Mammary epithelial cell (primary cell): ENCODE measurements at regions of chr3 and their contacts with region 1.

Region 1: GRCh38 chr3:47164007-47164881 is at the start of gene SETD2:
- DNase-seq: peak; percentile 91
- H3K4me3 ChIP-seq: peak within 1 kb of the TSS; percentile 92 to 99 (median 95)
- H3K27ac ChIP-seq: peak within 1 kb of the TSS; percentile 80
- H3K4me1 ChIP-seq: peaks cover 13% of the 10 kb centered on the region
- H3K27me3 ChIP-seq: no peaks in the 10 kb centered on the region
- CTCF ChIP-seq: peak in 1 of 2 donors; percentile 42
- total RNA-seq, gene SETD2: 27.7 to 36.5 TPM

Region 2: GRCh38 chr3:46935168-46935858 is 228.9 kb before region 1 on chr3:
- CTCF ChIA-PET with region 1: no interaction called
- dilution Hi-C with region 1: no loop called
- in situ Hi-C with region 1: no loop called
- intact Hi-C with region 1: loop called (anchors 1 kb)
- DNase-seq: peak; percentile 87
- H3K4me3 ChIP-seq: no peak overlapping the region
- H3K27ac ChIP-seq: peak overlapping the region; percentile 91
- H3K4me1 ChIP-seq: peaks cover 69% of the 10 kb centered on the region
- H3K27me3 ChIP-seq: no peaks in the 10 kb centered on the region
- CTCF ChIP-seq: peak; percentile 83 to 88

Region 3: DNA sequence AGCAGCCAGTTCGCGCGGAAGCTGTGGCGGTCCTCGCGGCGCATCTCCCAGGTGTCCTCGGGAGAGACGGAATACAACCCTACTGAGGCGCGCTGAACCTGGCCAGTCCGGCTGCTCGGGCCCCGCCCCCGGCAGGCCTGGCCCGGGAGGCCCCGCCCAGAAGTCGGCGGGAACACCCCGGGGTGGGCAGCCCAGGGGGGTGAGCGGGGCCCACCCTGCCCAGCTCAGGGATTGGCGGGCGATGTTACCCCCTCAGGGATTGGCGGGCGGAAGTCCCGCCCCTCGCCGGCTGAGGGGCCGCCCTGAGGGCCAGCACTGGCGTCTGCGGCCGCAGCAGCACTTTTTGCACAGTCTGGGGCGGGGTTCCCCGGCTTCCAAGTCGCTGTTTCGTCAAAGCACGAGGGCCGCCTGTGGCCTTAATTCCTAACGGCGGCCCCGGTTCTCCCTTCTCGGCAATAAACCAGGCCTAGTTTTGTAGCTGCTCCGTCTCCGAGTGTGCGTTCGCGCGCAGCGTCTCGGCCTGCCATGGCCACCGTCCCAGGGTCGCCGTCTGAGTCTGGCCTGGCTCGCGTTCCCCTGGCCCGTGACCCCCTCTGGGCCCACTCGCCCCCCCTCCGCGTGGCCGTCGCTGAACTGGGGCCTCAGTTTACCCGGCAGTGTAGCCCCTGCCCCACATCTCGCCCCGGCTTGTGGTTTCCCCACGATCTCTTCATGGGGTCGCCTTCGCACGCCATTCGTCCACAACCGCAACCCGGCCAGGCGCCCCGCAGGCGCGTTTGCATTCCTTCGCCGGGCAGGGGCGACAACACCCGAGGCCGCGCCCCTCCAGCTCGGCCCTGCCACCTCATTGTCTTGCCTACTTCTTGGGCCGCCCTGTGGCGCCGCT is 154.8 kb before region 1 on chr3:
- CTCF ChIA-PET with region 1: no interaction called
- dilution Hi-C with region 1: no loop called
- in situ Hi-C with region 1: no loop called
- intact Hi-C with region 1: loop called (anchors 10 kb)
- DNase-seq: peak; percentile 20
- H3K4me3 ChIP-seq: peak overlapping the region in 1 of 3 experiments; percentile 20
- H3K27ac ChIP-seq: no peak overlapping the region
- H3K4me1 ChIP-seq: peaks cover 5% of the 10 kb centered on the region
- H3K27me3 ChIP-seq: no peaks in the 10 kb centered on the region
- CTCF ChIP-seq: no peak

Region 4: GRCh38 chr3:47113669-47114365 is 50.4 kb before region 1 on chr3:
- CTCF ChIA-PET with region 1: no interaction called
- dilution Hi-C with region 1: no loop called
- in situ Hi-C with region 1: no loop called
- intact Hi-C with region 1: loop called (anchors 1 kb)
- DNase-seq: peak; percentile 79
- H3K4me3 ChIP-seq: no peak overlapping the region
- H3K27ac ChIP-seq: peak overlapping the region; percentile 87
- H3K4me1 ChIP-seq: peaks cover 23% of the 10 kb centered on the region
- H3K27me3 ChIP-seq: no peaks in the 10 kb centered on the region
- CTCF ChIP-seq: no peak

Region 5: DNA sequence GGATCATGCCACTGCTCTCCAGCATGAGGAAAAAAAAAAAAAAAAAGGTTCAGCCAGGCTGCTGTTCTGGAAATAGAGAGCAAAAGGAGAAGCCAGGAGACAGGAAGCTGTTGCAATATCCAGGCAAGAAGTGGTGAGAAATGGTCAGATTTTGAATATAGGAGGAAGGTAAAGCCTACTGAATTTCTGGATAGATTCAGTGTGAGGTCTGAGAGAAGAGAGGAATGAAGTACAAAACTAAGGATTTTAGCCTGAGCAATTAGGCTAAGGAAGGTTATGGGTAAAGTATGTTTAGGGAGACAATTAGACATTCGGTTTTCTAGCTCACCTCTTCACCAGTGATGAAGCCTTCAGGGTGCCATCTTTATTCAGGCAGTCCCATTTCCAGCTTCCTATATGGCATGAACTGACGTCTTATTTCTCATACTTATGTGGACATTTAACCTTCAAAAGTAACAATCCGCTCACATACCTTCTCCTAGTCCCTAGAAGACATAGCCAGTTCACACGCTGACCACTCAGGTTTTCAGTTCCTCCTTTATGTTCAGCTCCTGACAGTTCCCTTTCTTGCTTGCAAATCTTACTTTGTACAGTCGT is 61.2 kb after region 1 on chr3:
- CTCF ChIA-PET with region 1: interaction called, 19 read pairs
- dilution Hi-C with region 1: no loop called
- in situ Hi-C with region 1: no loop called
- intact Hi-C with region 1: no loop called
- DNase-seq: no peak
- H3K4me3 ChIP-seq: no peak overlapping the region
- H3K27ac ChIP-seq: no peak overlapping the region
- H3K4me1 ChIP-seq: no peaks in the 10 kb centered on the region
- H3K27me3 ChIP-seq: no peaks in the 10 kb centered on the region
- CTCF ChIP-seq: no peak

Region 6: DNA sequence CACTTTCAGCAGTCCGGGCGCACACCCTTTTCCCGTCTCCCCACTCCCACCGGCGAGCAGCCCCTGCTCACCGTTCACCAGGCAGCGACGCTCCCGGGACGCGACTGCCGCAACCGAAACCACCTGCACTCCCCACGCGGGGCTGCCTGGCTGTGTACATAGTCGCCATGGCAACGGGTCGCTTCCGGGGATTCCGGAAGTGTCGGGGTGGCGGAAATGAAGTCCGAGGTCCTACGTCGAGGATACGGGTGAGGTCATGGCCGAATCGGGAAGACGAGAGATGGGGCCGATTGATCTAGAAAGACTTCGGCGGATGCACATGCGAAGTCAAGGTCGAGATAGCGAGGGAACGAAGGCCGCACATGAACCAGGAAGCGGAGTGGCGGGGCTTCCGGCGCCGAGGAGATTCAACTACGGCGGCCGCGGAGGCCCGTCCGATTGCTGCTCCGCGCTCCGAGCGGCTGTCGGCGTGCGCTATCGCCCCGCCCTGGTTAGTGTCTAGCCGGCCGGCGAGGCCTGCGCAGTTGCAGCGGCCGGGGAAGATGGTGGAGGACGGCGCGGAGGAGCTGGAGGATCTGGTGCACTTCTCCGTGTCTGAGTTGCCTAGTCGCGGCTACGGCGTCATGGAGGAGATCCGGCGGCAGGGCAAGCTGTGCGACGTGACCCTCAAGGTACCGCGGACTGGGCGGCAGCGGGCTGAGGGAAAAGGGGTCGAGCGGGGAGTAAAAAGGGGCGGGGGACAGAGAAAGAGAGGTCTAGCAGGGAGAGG is 118.4 kb after region 1 on chr3 and contains the starts of genes KIF9 and KLHL18:
- CTCF ChIA-PET with region 1: no interaction called
- dilution Hi-C with region 1: no loop called
- in situ Hi-C with region 1: no loop called
- intact Hi-C with region 1: loop called (anchors 5 kb)
- DNase-seq: peak; percentile 92
- H3K4me3 ChIP-seq: peak within 1 kb of the TSS; percentile 83 to 96 (median 95)
- H3K27ac ChIP-seq: peak within 1 kb of the TSS; percentile 99
- H3K4me1 ChIP-seq: peaks cover 6% of the 10 kb centered on the region
- H3K27me3 ChIP-seq: no peaks in the 10 kb centered on the region
- CTCF ChIP-seq: no peak
- total RNA-seq, gene KIF9: 4.0 to 5.6 TPM
- total RNA-seq, gene KLHL18: 27.2 to 35.9 TPM

Region 7: GRCh38 chr3:47370887-47371697 is 206.8 kb after region 1 on chr3:
- CTCF ChIA-PET with region 1: no interaction called
- dilution Hi-C with region 1: no loop called
- in situ Hi-C with region 1: no loop called
- intact Hi-C with region 1: loop called (anchors 10 kb)
- DNase-seq: no peak
- H3K4me3 ChIP-seq: no peak overlapping the region
- H3K27ac ChIP-seq: no peak overlapping the region
- H3K4me1 ChIP-seq: no peaks in the 10 kb centered on the region
- H3K27me3 ChIP-seq: no peaks in the 10 kb centered on the region
- CTCF ChIP-seq: peak in 1 of 2 donors; percentile 37